ENCODE measurements at regions of chr15 and their contacts with region 1.

Region 1: DNA sequence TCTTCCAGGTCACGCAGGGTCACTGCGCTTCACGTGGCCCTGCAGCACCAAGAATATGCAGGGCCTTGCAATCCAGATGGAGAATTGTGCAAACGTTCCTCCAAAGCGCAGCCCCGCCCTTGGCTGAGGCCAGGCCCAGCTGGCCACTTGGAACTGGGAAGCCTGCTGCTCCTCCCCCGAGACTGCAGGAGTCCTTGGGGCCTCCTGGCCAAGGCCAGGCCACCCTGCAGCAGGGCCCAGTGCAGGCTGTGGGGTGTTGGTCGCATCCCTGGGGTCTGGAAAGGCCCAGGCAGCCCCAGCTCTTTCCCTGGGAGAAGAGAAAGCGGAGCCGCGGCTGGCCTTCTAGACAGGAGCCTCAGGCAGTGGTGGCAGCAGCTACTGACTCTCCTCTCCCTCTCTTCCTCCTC is 103.7 kb downstream of the TMEM266 start:
- DNase-seq: peak; percentile 92 to 97
- ATAC-seq: peak; percentile 93 to 96 (median 95)
- H3K4me3 ChIP-seq: no peak overlapping the region
- H3K27ac ChIP-seq: peak overlapping the region; percentile 79
- H3K4me1 ChIP-seq: peaks cover 22% of the 10 kb centered on the region
- H3K27me3 ChIP-seq: no peaks in the 10 kb centered on the region
- CTCF ChIP-seq: no peak

Region 2: GRCh38 chr15:76177491-76178040 is 14.1 kb after region 1 on chr15:
- intact Hi-C with region 1: loop called in 1 of 2 experiments (anchors 1 kb)
- DNase-seq: peak; percentile 87 to 95
- ATAC-seq: peak; percentile 79 to 91 (median 84)
- H3K4me3 ChIP-seq: peak overlapping the region; percentile 38
- H3K27ac ChIP-seq: peak overlapping the region; percentile 94
- H3K4me1 ChIP-seq: peaks cover 44% of the 10 kb centered on the region
- H3K27me3 ChIP-seq: no peaks in the 10 kb centered on the region
- CTCF ChIP-seq: no peak